B cell (primary cell): ENCODE measurements at regions of chr2 and their contacts with region 1.

Region 1: GRCh38 chr2:218010140-218010983 is 7.6 kb upstream of the TNS1 start:
- DNase-seq: peak; percentile 51
- ATAC-seq: peak; percentile 41
- H3K4me3 ChIP-seq: peak overlapping the region in 3 of 5 experiments; percentile 41 to 54 (median 43)
- H3K4me3 Mint-ChIP-seq: peak overlapping the region; percentile 78
- H3K27ac ChIP-seq: no peak overlapping the region
- H3K27ac Mint-ChIP-seq: no peak overlapping the region
- H3K4me1 ChIP-seq: peaks cover 14 to 20% of the 10 kb centered on the region in 2 donors
- H3K4me1 Mint-ChIP-seq: peaks cover 12% of the 10 kb centered on the region
- H3K27me3 ChIP-seq: peaks cover 0 to 28% (median 16%) of the 10 kb centered on the region in 4 experiments
- H3K27me3 Mint-ChIP-seq: peaks cover 58% of the 10 kb centered on the region
- CTCF ChIP-seq: peak; percentile 19

Region 2: GRCh38 chr2:218074031-218074430 is 63.7 kb after region 1 on chr2:
- CTCF ChIA-PET with region 1: no interaction called
- POLR2A ChIA-PET with region 1: no interaction called
- intact Hi-C with region 1: loop called (anchors 2 kb)
- DNase-seq: no peak
- ATAC-seq: no peak
- H3K4me3 ChIP-seq: no peak overlapping the region
- H3K4me3 Mint-ChIP-seq: no peak overlapping the region
- H3K27ac ChIP-seq: no peak overlapping the region
- H3K27ac Mint-ChIP-seq: no peak overlapping the region
- H3K4me1 ChIP-seq: no peaks in the 10 kb centered on the region
- H3K4me1 Mint-ChIP-seq: no peaks in the 10 kb centered on the region
- H3K27me3 ChIP-seq: peaks cover 0 to 3% (median 0%) of the 10 kb centered on the region in 4 experiments
- H3K27me3 Mint-ChIP-seq: peaks cover 19% of the 10 kb centered on the region
- CTCF ChIP-seq: peak; percentile 18